ENCODE measurements at regions of chr12 and their contacts with region 1.

Region 1: GRCh38 chr12:48851883-48852733 is at the start of gene DDX23:
- DNase-seq: peak; percentile 94
- H3K4me3 ChIP-seq: peak within 1 kb of the TSS; percentile 90
- H3K27ac ChIP-seq: peak within 1 kb of the TSS; percentile 47
- H3K27me3 ChIP-seq: peaks cover 4% of the 10 kb centered on the region
- CTCF ChIP-seq: no peak
- polyA plus RNA-seq, gene DDX23: 56.6 and 57.4 TPM in 2 replicates

Region 2: GRCh38 chr12:48765753-48766162 is 86.3 kb before region 1 on chr12:
- CTCF ChIA-PET with region 1: no interaction called
- POLR2A ChIA-PET with region 1: no interaction called
- DNase-seq: no peak
- H3K4me3 ChIP-seq: no peak overlapping the region
- H3K27ac ChIP-seq: peak overlapping the region; percentile 34
- H3K27me3 ChIP-seq: no peaks in the 10 kb centered on the region
- CTCF ChIP-seq: no peak

Region 3: GRCh38 chr12:48865434-48866290 is 13.6 kb after region 1 on chr12 and contains the start of gene RND1:
- CTCF ChIA-PET with region 1: interaction called, 40 read pairs
- POLR2A ChIA-PET with region 1: interaction called, 3 read pairs
- DNase-seq: peak; percentile 70
- H3K4me3 ChIP-seq: peak within 1 kb of the TSS; percentile 66
- H3K27ac ChIP-seq: no peak within 1 kb of the TSS
- H3K27me3 ChIP-seq: peaks cover 36% of the 10 kb centered on the region
- CTCF ChIP-seq: peak; percentile 32
- polyA plus RNA-seq, gene RND1: 0.36 and 0.42 TPM in 2 replicates

Region 4: DNA sequence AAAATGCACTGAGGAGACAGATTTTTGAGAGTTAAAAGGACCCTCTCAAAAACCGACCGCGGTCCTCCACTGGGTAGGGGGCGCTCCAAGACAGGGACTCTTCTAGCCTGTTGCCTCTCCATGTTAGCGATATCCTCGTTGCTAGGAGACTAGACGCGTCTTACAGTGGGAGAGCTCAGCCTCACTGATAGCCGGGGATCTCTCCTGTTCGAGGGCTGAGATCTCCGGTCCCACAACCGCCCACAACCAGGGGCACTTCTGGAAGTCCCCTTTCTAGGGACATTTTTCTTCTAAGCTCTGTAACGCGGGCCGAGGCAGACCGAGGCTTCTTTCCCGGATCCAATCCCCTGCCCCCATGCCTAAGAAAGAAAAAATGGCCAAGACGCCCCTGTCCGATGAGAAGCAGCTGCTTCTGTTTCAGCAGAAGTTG is 51.9 kb after region 1 on chr12:
- CTCF ChIA-PET with region 1: interaction called, 26 read pairs
- POLR2A ChIA-PET with region 1: no interaction called
- DNase-seq: peak; percentile 62
- H3K4me3 ChIP-seq: peak overlapping the region; percentile 60
- H3K27ac ChIP-seq: no peak overlapping the region
- H3K27me3 ChIP-seq: no peaks in the 10 kb centered on the region
- CTCF ChIP-seq: peak; percentile 78

Region 5: GRCh38 chr12:48936379-48936979 is 84.4 kb after region 1 on chr12:
- CTCF ChIA-PET with region 1: interaction called, 140 read pairs
- POLR2A ChIA-PET with region 1: interaction called, 4 read pairs
- DNase-seq: peak; percentile 59
- H3K4me3 ChIP-seq: no peak overlapping the region
- H3K27ac ChIP-seq: no peak overlapping the region
- H3K27me3 ChIP-seq: no peaks in the 10 kb centered on the region
- CTCF ChIP-seq: peak; percentile 95

Region 6: DNA sequence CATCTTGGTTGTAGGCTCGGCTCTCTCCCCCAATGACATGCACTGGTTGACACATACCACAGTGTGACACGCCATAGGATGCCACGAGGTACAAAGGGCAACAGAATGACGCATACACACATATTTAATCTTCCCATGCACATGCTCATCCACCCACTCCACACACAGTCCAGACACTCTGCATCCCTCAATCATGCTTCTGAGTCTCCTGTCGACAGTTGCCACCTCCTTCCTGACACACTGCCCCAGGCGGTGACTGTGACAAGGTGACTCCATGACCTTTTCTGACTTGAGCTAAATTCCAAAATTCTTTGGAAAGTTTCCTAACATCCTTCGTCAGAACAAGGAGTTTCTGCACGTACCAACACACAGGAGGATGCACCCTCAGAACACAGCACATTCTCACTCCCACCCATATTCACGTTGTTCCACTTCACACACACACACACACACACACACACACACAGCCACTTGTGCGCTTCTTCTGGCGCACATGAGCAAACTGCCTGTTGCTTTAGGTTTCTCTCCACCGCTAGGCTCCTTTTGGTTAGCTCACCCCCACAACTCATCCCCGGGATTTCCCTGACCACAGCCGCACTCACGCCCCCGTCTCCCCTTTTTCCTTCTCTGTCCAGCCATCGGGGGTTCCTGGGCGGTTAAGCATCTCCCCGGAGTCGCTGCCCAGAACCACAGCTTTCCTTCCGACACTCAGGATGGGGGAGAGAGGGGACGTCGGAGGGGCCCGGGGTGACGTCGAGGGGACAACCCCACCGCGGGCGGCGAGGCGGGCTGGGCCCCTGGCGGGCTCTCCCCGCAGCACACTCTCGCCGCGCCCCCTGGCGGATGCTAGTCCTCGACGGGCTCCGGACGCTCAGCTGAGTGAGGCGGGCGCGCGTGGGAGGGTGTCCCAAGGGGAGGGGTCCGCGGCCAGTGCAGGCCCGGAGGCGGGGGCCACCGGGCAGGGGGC is 125.5 kb after region 1 on chr12:
- CTCF ChIA-PET with region 1: interaction called, 19 read pairs
- POLR2A ChIA-PET with region 1: no interaction called
- DNase-seq: no peak
- H3K4me3 ChIP-seq: no peak overlapping the region
- H3K27ac ChIP-seq: no peak overlapping the region
- H3K27me3 ChIP-seq: peaks cover 64% of the 10 kb centered on the region
- CTCF ChIP-seq: peak; percentile 63